Activated B cell treated with CpG ODN at 0.5 μM for 24 hours (primary cell): ENCODE measurements at regions of chr18 and their contacts with region 1.

Region 1: GRCh38 chr18:32735781-32736180 is 37.0 kb downstream of the KLHL14 start:
- DNase-seq: no peak
- ATAC-seq: no peak
- H3K4me3 Mint-ChIP-seq: no peak overlapping the region
- H3K27ac Mint-ChIP-seq: no peak overlapping the region
- H3K4me1 Mint-ChIP-seq: peaks cover 54% of the 10 kb centered on the region
- H3K27me3 Mint-ChIP-seq: no peaks in the 10 kb centered on the region
- CTCF ChIP-seq: no peak

Region 2: GRCh38 chr18:30730915-30731314 is 2004.9 kb before region 1 on chr18:
- CTCF ChIA-PET with region 1: no interaction called
- POLR2A ChIA-PET with region 1: no interaction called
- intact Hi-C with region 1: no loop called
- DNase-seq: no peak
- ATAC-seq: no peak
- H3K4me3 Mint-ChIP-seq: no peak overlapping the region
- H3K27ac Mint-ChIP-seq: no peak overlapping the region
- H3K4me1 Mint-ChIP-seq: no peaks in the 10 kb centered on the region
- H3K27me3 Mint-ChIP-seq: no peaks in the 10 kb centered on the region
- CTCF ChIP-seq: no peak

Region 3: GRCh38 chr18:32724071-32724696 is 11.6 kb before region 1 on chr18:
- CTCF ChIA-PET with region 1: no interaction called
- POLR2A ChIA-PET with region 1: no interaction called
- intact Hi-C with region 1: loop called (anchors 2 kb)
- DNase-seq: no peak
- ATAC-seq: no peak
- H3K4me3 Mint-ChIP-seq: no peak overlapping the region
- H3K27ac Mint-ChIP-seq: no peak overlapping the region
- H3K4me1 Mint-ChIP-seq: peaks cover 28% of the 10 kb centered on the region
- H3K27me3 Mint-ChIP-seq: no peaks in the 10 kb centered on the region
- CTCF ChIP-seq: no peak